Spleen (tissue), 13 donors: ENCODE measurements at regions of chr19 and their contacts with region 1.

Region 1: DNA sequence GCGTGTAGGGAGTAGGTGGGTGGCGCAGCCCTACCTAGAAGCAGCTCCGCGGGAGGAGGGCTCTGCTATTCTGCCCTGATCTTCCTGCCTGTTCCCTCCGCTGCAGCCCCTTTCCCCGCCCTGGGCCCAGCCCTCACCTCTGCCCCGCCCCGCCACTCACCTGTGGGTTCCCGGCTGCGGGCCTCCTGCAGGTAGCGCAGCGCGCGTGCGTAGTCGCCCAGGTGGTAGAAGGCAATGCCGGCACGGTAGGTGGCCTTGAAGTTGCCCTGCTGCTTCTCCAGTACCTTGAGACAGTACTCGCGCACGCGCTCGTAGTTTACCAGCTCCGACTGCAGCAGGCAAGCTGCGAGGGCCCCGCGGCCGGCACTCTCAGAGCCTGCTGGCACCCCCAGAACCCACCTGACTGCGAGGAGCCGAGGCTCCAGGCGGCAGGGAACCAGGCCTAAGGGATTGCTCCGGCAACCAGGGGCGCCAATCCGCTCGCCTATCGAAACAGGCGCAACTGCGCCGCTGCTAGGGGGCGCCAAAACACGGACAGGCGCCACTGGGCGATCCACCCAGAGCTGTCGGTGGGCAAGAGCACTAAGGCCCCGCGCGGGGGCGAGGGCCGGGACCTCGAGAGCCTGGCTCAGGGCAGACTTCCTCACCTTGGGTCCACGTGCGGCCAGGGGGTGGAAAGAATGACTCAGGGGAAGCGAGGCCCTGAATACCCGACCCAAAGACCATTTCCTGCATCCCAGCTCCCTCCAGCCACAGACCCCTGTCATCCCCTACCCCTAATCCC is 965 bp downstream of the TTC9B start:
- DNase-seq: no peak
- H3K4me3 ChIP-seq: peak overlapping the region in 1 of 8 donors; percentile 39
- H3K27ac ChIP-seq: no peak overlapping the region
- H3K4me1 ChIP-seq: peaks cover 0 to 15% (median 11%) of the 10 kb centered on the region in 6 donors
- H3K27me3 ChIP-seq: peaks cover 6 to 69% (median 36%) of the 10 kb centered on the region in 7 donors
- CTCF ChIP-seq: peak in 2 of 11 experiments; percentile 22 to 27
- POLR2A ChIP-seq: no peak

Region 2: DNA sequence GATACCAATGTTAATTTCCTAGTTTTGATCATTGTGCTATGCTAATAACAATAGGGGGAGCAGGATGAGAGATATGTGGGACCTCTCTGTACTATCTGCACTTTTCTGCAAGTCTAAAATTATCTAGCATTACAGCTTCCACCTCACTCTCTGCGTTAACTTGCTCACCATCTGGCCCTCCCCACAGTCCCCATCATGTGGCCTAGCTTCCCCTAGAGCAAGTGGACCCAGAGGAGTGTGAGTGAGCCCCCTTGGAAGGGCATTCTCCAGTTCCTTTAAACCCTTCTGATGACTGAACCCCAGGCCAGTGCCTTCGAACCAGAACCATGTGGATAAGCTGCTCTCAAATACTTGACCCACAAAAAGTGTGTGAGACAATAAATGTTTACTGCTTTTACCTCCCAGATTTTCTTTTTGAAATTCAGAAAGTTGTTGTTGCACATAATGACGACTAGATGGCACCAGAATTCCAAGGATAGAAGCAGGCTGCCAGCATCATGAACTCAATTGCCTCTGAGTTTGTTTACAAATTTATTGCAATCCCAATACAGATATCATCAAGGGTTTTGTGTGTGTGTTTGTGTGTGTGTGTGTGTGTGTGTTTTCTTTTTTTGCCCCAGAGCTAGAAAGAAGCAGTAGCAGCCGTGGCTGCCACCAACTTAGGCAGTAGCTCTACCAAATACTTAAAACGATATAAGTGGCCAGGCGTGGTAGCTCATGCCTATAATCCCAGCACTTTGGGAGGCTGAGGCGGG is 77.5 kb before region 1 on chr19:
- intact Hi-C with region 1: loop called (anchors 5 kb)
- DNase-seq: no peak
- H3K4me3 ChIP-seq: no peak overlapping the region
- H3K27ac ChIP-seq: no peak overlapping the region
- H3K4me1 ChIP-seq: peaks cover 12 to 42% (median 26%) of the 10 kb centered on the region in 6 donors
- H3K27me3 ChIP-seq: no peaks in the 10 kb centered on the region
- CTCF ChIP-seq: peak; percentile 38 to 83 (median 69)
- POLR2A ChIP-seq: no peak

Region 3: GRCh38 chr19:40274585-40275552 is 57.6 kb after region 1 on chr19:
- intact Hi-C with region 1: no loop called
- DNase-seq: peak; percentile 80
- H3K4me3 ChIP-seq: peak overlapping the region in 1 of 8 donors; percentile 31
- H3K27ac ChIP-seq: peak overlapping the region in 3 of 8 donors; percentile 7 to 42 (median 28)
- H3K4me1 ChIP-seq: peaks cover 26 to 98% (median 78%) of the 10 kb centered on the region in 6 donors
- H3K27me3 ChIP-seq: no peaks in the 10 kb centered on the region
- CTCF ChIP-seq: no peak
- POLR2A ChIP-seq: no peak